Transverse colon (tissue), 4 donors: ENCODE measurements at regions of chr12 and their contacts with region 1.

Region 1: GRCh38 chr12:50825372-50825838 is 17.3 kb upstream of the TMPRSS12 start:
- DNase-seq: no peak
- H3K4me3 ChIP-seq: no peak overlapping the region
- H3K27ac ChIP-seq: peak overlapping the region; percentile 11 to 61 (median 42)
- H3K4me1 ChIP-seq: peaks cover 0 to 12% (median 4%) of the 10 kb centered on the region in 4 donors
- H3K27me3 ChIP-seq: no peaks in the 10 kb centered on the region
- CTCF ChIP-seq: peak; percentile 43 to 84 (median 51)
- EP300 ChIP-seq: no peak
- POLR2A ChIP-seq: no peak

Region 2: DNA sequence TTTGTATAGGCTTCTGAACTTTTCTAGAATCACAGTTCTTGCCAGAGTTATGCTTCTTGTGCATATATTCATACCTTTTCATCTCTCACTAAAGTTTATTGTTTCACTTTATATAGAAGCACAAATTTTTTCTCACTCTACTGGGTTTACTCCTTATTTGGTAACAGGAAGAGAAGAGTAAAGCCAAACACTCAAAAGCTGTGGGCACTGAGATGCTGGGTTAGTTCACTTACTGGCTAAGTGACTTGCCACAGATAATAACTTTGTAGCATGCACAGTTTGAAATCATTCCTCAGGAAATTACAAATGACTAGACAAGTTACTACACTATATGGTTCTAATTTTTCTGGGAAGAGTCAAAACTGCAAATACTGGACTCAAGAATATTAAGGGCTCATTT is 134.7 kb after region 1 on chr12:
- in situ Hi-C with region 1: loop called in 1 of 4 experiments (anchors 25 kb)
- intact Hi-C with region 1: no loop called
- DNase-seq: no peak
- H3K4me3 ChIP-seq: no peak overlapping the region
- H3K27ac ChIP-seq: no peak overlapping the region
- H3K4me1 ChIP-seq: no peaks in the 10 kb centered on the region
- H3K27me3 ChIP-seq: no peaks in the 10 kb centered on the region
- CTCF ChIP-seq: no peak
- EP300 ChIP-seq: no peak
- POLR2A ChIP-seq: no peak

Region 3: DNA sequence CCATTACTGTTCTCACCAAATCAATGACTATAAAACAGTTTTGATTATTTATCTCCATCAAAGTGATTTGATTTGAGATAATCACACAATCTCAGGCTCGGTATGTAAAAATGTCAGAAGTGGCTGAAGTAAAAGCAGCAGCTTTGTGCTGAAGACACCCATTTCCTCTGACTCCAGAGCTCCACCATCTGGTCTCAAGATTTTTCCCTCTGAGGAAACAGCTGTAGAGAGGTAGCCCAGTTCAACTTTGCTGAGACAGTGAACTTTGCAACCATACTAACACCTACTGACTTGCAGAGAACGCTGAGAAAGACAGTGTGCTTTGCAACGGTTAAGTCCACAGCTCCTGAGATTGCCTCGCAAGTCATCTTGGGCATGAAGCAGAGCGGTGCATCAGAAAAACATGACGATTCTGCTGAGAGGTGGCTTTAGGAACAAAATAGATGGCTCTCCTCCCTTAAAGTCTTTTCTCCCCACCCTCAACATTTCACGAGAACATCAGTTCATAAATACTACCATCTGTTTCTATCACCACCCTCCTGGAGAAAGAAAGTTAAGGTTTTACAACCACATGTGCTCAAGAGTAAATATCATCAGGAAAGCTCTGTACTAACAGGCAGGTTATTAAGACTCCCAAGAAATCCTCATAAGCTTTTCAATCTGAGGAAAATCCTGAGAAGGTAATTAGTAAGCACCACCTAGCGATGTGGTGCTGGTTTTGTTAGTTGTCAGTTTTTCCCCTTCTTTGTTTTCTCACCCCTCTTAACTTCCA is 161.7 kb after region 1 on chr12:
- in situ Hi-C with region 1: loop called in 3 of 4 experiments (anchors 10 kb)
- intact Hi-C with region 1: loop called (anchors 2 kb)
- DNase-seq: peak; percentile 63
- H3K4me3 ChIP-seq: no peak overlapping the region
- H3K27ac ChIP-seq: peak overlapping the region; percentile 54 to 72 (median 68)
- H3K4me1 ChIP-seq: peaks cover 13 to 31% (median 17%) of the 10 kb centered on the region in 4 donors
- H3K27me3 ChIP-seq: no peaks in the 10 kb centered on the region
- CTCF ChIP-seq: peak; percentile 45 to 56 (median 50)
- EP300 ChIP-seq: no peak
- POLR2A ChIP-seq: no peak

Region 4: DNA sequence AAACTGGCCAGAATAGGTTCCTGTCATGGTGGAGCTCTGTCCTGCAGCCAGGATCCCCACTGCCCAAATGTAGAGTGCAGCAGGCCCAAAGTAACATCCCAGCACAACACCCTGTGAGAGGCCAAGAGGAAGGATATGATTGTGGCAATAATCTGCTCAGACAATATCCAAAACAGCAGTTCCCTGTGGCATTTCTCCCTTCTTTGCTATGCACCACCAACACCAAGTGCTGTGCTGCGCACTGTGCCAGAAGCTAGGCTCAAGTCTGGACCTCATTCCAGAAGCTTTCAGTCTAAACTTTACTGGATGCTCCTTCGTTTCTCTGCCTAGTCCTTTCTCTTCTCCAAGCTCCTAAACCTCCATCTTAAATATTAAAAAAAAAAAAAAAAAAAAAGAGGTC is 167.4 kb after region 1 on chr12:
- in situ Hi-C with region 1: loop called in 3 of 4 experiments (anchors 10 kb)
- intact Hi-C with region 1: no loop called
- DNase-seq: no peak
- H3K4me3 ChIP-seq: no peak overlapping the region
- H3K27ac ChIP-seq: no peak overlapping the region
- H3K4me1 ChIP-seq: peaks cover 0 to 1% (median 0%) of the 10 kb centered on the region in 4 donors
- H3K27me3 ChIP-seq: no peaks in the 10 kb centered on the region
- CTCF ChIP-seq: no peak
- EP300 ChIP-seq: no peak
- POLR2A ChIP-seq: no peak